ENCODE measurements at regions of chr1 and their contacts with region 1.

Region 1: GRCh38 chr1:23772049-23772853 is 6.0 kb upstream of the PITHD1 start:
- DNase-seq: peak; percentile 88
- H3K4me3 Mint-ChIP-seq: no peak overlapping the region
- H3K27ac Mint-ChIP-seq: no peak overlapping the region
- H3K4me1 Mint-ChIP-seq: peaks cover 37% of the 10 kb centered on the region
- H3K27me3 Mint-ChIP-seq: no peaks in the 10 kb centered on the region

Region 2: GRCh38 chr1:23751050-23751814 is 21.0 kb before region 1 on chr1:
- CTCF ChIA-PET with region 1: interaction called, 21 read pairs
- POLR2A ChIA-PET with region 1: interaction called, 3 read pairs
- DNase-seq: peak; percentile 45
- H3K4me3 Mint-ChIP-seq: no peak overlapping the region
- H3K27ac Mint-ChIP-seq: no peak overlapping the region
- H3K4me1 Mint-ChIP-seq: peaks cover 28% of the 10 kb centered on the region
- H3K27me3 Mint-ChIP-seq: no peaks in the 10 kb centered on the region

Region 3: DNA sequence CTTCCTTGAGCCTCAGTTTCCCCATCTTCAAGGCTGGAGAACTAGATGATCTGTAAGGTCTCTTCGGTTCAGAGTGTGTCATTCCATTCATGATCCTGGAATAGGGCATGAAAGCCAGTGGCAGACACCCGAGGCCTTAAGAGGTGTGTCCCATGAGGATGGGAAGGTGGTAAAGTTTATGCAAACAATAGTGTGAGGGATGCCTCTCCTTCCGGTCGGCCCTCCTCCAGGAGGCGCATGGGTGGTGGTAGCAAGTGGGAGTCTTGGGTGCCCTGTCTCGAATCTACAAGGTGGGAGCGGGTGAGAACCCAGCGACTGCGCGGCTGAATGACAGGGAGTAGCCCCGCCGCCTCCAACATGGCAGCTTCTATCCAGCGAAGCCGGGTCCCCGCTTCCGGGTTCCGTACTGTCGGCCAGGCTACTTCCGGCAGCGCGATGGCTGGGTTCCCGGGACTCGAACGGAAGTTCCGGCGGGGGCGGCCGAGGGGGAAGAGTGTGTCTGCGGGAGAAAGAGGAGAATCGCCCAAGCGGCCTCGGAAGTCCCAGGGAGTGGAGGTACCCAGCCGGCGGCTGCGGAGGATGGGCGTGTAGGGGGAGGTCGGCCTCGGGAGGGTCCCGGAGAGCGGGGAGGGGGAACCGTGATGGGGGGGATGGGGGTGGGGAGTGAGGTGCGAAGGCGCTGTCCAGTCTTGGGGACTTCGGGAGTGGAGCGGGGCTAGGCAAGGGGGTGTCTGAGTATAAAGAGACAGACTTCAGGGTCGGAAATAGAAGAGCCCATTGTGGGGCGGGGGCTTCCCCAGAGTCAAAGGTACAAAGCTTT is 18.7 kb after region 1 on chr1 and contains the start of gene LYPLA2:
- CTCF ChIA-PET with region 1: interaction called, 10 read pairs
- POLR2A ChIA-PET with region 1: interaction called, 115 read pairs
- DNase-seq: peak; percentile 90
- H3K4me3 Mint-ChIP-seq: peak within 1 kb of the TSS; percentile 94
- H3K27ac Mint-ChIP-seq: peak within 1 kb of the TSS; percentile 91
- H3K4me1 Mint-ChIP-seq: peaks cover 32% of the 10 kb centered on the region
- H3K27me3 Mint-ChIP-seq: no peaks in the 10 kb centered on the region
- total RNA-seq, gene LYPLA2: 76.1 to 80.8 TPM

Region 4: DNA sequence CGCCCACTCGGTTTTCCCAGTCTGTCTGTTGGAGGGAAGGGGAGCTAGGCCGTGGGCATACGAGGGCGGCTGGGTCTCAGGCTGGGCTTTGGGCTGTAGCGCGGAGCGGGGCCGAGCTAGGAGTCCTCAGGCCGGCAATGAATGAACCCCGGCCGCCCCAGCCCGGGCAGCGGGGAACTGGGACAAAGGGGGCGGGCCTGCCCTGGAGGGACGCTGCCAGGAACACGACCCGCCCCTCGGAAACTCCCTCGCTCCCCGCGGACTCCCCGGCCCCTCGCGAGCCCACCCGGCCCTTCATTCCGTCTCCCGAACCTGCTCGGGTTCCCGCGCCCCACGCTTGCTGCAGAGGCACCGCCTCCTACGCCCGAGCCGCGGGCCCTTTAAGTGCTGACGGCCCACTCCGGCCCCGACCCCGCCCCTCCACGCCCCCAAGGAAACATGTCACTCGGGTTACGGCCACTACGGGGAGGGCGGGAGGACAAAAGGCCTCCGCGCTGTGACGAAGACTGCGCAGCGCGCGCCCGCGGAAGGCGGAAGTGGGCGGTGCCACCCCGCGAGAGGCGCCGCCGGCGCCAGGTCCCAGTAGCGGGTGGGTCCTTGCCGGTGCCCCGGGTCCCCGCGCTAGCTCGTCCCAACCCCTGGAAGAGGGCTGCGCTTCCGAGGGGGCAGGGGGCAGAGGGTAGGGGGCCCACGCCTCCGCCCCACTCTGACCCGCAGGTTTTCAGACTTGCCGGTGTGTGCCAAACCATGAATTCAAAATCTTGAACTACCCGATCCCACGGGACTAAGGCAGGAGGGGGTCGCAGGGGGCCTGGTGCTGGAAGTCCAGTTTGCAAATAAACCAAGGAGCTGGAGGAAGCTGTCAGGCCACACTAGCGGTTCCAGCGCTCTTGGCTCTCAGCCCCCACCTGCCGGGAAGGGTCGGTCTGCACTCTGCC is 28.4 kb after region 1 on chr1 and contains the start of gene GALE:
- CTCF ChIA-PET with region 1: interaction called, 10 read pairs
- POLR2A ChIA-PET with region 1: interaction called, 61 read pairs
- DNase-seq: peak; percentile 98
- H3K4me3 Mint-ChIP-seq: peak within 1 kb of the TSS; percentile 96
- H3K27ac Mint-ChIP-seq: peak within 1 kb of the TSS; percentile 95
- H3K4me1 Mint-ChIP-seq: peaks cover 25% of the 10 kb centered on the region
- H3K27me3 Mint-ChIP-seq: no peaks in the 10 kb centered on the region
- total RNA-seq, gene GALE: 33.5 to 37.6 TPM

Region 5: GRCh38 chr1:23825076-23825761 is 53.0 kb after region 1 on chr1 and contains the start of gene HMGCL:
- CTCF ChIA-PET with region 1: interaction called, 10 read pairs
- POLR2A ChIA-PET with region 1: interaction called, 11 read pairs
- DNase-seq: peak; percentile 91
- H3K4me3 Mint-ChIP-seq: peak within 1 kb of the TSS; percentile 94
- H3K27ac Mint-ChIP-seq: peak within 1 kb of the TSS; percentile 87
- H3K4me1 Mint-ChIP-seq: peaks cover 25% of the 10 kb centered on the region
- H3K27me3 Mint-ChIP-seq: no peaks in the 10 kb centered on the region
- total RNA-seq, gene HMGCL: 33.5 to 35.7 TPM

Region 6: DNA sequence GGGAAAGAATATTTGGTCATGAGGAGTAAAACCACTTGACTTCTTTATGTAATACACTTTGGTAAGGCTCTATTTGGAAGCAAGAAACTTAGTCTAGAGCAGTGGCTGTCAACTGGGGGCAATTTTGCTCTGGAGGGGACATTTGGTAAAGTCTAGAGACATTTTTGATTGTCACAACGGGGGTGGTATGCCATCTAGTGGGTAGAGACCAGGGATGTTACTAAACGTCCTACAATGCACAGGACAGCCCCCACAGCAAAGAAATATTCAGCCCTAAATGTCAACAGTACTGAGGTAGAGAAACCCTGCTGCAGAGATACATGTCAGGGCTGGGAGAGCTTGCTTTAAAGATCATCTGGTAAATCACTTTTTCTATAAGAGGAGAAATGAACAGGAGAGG is 82.3 kb after region 1 on chr1:
- CTCF ChIA-PET with region 1: interaction called, 12 read pairs
- POLR2A ChIA-PET with region 1: no interaction called
- DNase-seq: no peak
- H3K4me3 Mint-ChIP-seq: no peak overlapping the region
- H3K27ac Mint-ChIP-seq: no peak overlapping the region
- H3K4me1 Mint-ChIP-seq: peaks cover 7% of the 10 kb centered on the region
- H3K27me3 Mint-ChIP-seq: no peaks in the 10 kb centered on the region

Region 7: GRCh38 chr1:23916209-23917131 is 144.2 kb after region 1 on chr1:
- CTCF ChIA-PET with region 1: interaction called, 34 read pairs
- POLR2A ChIA-PET with region 1: interaction called, 3 read pairs
- DNase-seq: peak; percentile 54
- H3K4me3 Mint-ChIP-seq: no peak overlapping the region
- H3K27ac Mint-ChIP-seq: no peak overlapping the region
- H3K4me1 Mint-ChIP-seq: peaks cover 19% of the 10 kb centered on the region
- H3K27me3 Mint-ChIP-seq: peaks cover 3% of the 10 kb centered on the region

Region 8: GRCh38 chr1:24526940-24527542 is 754.8 kb after region 1 on chr1:
- CTCF ChIA-PET with region 1: no interaction called
- POLR2A ChIA-PET with region 1: no interaction called
- DNase-seq: peak; percentile 57
- H3K4me3 Mint-ChIP-seq: no peak overlapping the region
- H3K27ac Mint-ChIP-seq: peak overlapping the region; percentile 14
- H3K4me1 Mint-ChIP-seq: peaks cover 25% of the 10 kb centered on the region
- H3K27me3 Mint-ChIP-seq: no peaks in the 10 kb centered on the region

Measured in activated CD4-positive, alpha-beta memory T cell treated with anti-CD3 and anti-CD28 coated beads, Interleukin-2, amount 10 ng/mL, durations not matched to agents 7 days and 5 days (primary cell).